ENCODE measurements at regions of chr5 and their contacts with region 1.

Region 1: DNA sequence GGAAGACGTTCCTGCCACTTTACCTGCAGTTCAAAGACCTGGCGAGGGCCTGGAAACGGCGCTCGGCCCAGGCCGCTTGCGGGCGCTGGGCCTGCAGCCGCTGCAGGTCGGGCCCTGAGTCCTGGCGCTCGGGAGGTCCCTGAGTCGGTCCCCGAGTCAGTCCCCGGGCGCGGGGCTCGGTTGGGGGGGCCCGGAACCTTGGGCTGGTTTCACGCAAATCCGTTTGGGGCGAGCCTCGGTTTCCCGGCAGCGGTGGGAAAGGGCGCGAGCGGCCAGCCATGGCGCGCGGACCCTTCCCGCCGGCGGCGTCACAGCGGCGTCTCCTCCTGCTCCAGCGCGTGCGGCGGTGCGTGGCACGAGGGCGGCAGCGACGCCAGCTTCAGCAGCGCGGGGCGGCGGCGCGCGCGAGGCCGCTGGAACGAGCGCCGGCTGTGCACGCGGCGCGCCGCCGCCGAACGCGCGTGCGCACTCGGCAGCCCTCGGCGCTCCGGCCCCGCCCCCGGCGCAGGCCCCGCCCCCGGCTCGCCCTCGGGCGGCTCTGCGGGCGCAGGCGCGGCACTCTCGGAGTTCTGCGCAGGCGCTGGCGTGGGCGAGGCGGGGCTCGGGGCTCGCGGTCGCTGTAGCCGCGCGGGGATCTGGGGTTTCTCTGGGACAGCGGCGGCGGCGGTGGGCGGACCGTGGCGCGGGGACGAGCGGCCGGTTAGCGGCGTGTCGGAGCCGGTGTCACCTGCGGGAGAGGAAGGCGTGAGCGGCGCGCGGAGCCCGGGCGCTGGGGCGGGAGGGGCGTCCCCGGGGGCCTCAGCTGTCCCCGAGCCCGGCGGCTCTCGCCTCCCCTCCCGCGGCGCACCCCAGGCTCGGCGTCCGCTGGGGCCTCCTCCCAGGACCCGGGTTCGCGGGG is 29.9 kb downstream of the EXOC3 start:
- DNase-seq: peak; percentile 76 to 95 (median 86)
- ATAC-seq: peak; percentile 84
- H3K4me3 ChIP-seq: peak overlapping the region; percentile 75
- H3K4me3 Mint-ChIP-seq: peak overlapping the region; percentile 87
- H3K27ac ChIP-seq: peak overlapping the region in 1 of 2 donors; percentile 74
- H3K27ac Mint-ChIP-seq: peak overlapping the region; percentile 87
- H3K4me1 ChIP-seq: peaks cover 42% of the 10 kb centered on the region
- H3K4me1 Mint-ChIP-seq: peaks cover 27% of the 10 kb centered on the region
- H3K27me3 ChIP-seq: peaks cover 14 to 16% of the 10 kb centered on the region in 2 experiments
- H3K27me3 Mint-ChIP-seq: peaks cover 20% of the 10 kb centered on the region
- CTCF ChIP-seq: no peak

Region 2: GRCh38 chr5:217860-218456 is 254.9 kb before region 1 on chr5 and contains the starts of genes CCDC127 and SDHA:
- CTCF ChIA-PET with region 1: no interaction called
- POLR2A ChIA-PET with region 1: no interaction called
- intact Hi-C with region 1: loop called in 1 of 2 experiments (anchors 5 kb)
- DNase-seq: peak; percentile 95 to 100 (median 98)
- ATAC-seq: peak; percentile 81
- H3K4me3 ChIP-seq: peak within 1 kb of the TSS; percentile 93
- H3K4me3 Mint-ChIP-seq: peak within 1 kb of the TSS; percentile 99
- H3K27ac ChIP-seq: peak within 1 kb of the TSS; percentile 57 to 80
- H3K27ac Mint-ChIP-seq: peak within 1 kb of the TSS; percentile 96
- H3K4me1 ChIP-seq: peaks cover 46% of the 10 kb centered on the region
- H3K4me1 Mint-ChIP-seq: peaks cover 68% of the 10 kb centered on the region
- H3K27me3 ChIP-seq: no peaks in the 10 kb centered on the region
- H3K27me3 Mint-ChIP-seq: no peaks in the 10 kb centered on the region
- CTCF ChIP-seq: peak; percentile 30
- total RNA-seq, gene CCDC127: 1.9 to 2.8 TPM
- total RNA-seq, gene SDHA: 244 to 245 TPM

Region 3: DNA sequence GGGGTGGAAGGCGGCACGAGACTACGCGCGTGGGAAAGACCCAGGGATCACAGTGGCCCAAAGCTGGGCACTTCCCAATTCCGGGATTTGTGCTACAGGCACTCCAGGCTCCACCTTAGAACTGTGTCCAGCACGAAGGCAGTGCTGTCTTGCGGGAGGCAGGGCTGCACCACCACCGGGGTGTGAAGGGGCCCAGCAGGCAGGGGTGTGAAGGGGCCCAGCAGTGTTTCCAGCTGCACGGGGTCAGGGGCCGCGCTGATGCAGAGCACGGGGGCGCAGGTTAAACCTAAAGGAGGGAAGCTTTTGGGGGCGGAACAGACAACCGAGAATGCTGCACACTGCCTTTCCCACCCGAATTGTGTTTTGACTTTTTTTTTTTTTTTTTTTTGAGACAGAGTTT is 202.6 kb before region 1 on chr5:
- CTCF ChIA-PET with region 1: no interaction called
- POLR2A ChIA-PET with region 1: no interaction called
- intact Hi-C with region 1: loop called in 1 of 2 experiments (anchors 5 kb)
- DNase-seq: peak in 1 of 14 experiments; percentile 32
- ATAC-seq: no peak
- H3K4me3 ChIP-seq: peak overlapping the region; percentile 78
- H3K4me3 Mint-ChIP-seq: peak overlapping the region; percentile 82
- H3K27ac ChIP-seq: no peak overlapping the region
- H3K27ac Mint-ChIP-seq: peak overlapping the region; percentile 87
- H3K4me1 ChIP-seq: peaks cover 22% of the 10 kb centered on the region
- H3K4me1 Mint-ChIP-seq: peaks cover 37% of the 10 kb centered on the region
- H3K27me3 ChIP-seq: no peaks in the 10 kb centered on the region
- H3K27me3 Mint-ChIP-seq: no peaks in the 10 kb centered on the region
- CTCF ChIP-seq: no peak

Region 4: GRCh38 chr5:565782-566440 is 93.0 kb after region 1 on chr5:
- CTCF ChIA-PET with region 1: no interaction called
- POLR2A ChIA-PET with region 1: no interaction called
- intact Hi-C with region 1: no loop called
- DNase-seq: no peak
- ATAC-seq: no peak
- H3K4me3 ChIP-seq: no peak overlapping the region
- H3K4me3 Mint-ChIP-seq: no peak overlapping the region
- H3K27ac ChIP-seq: no peak overlapping the region
- H3K27ac Mint-ChIP-seq: no peak overlapping the region
- H3K4me1 ChIP-seq: no peaks in the 10 kb centered on the region
- H3K4me1 Mint-ChIP-seq: no peaks in the 10 kb centered on the region
- H3K27me3 ChIP-seq: peaks cover 0 to 11% of the 10 kb centered on the region in 2 experiments
- H3K27me3 Mint-ChIP-seq: peaks cover 23% of the 10 kb centered on the region
- CTCF ChIP-seq: no peak

Region 5: DNA sequence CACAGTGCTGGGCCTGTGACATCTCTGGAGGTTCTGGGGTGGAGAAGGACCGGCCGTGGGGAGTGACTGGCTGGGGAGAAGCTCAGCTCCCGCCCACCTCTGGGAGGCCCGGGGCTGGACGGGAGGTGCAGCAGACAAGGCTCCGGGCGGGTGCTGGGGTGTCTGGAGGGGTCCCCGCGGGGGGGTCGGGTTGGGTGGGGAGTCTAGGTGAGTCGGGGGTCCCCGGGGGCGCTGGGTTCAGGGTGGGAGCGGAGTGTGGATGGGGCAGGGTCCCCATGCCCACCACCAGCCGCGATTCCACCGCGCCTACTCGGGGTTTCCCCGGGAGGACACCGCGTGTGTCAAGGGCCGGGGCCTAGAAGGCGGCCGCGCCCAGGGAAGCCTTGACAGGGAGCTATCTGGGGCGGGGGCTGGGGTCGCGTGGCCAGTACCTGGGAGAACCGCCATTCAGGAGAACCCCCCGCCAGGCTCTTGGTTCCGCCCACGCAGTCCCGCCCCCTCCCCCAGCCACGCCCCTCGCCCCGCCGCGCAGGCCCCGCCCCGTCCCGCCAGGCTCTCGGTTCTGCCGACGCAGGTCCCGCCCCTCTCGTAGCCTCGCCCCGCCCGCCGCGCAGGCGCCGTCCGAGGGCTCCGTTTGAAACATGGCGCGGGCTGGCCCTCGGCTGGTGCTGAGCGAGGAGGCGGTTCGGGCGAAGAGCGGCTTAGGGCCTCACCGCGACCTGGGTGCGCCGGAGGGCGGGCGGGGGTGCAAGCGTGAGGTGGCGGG is 139.0 kb after region 1 on chr5 and contains the start of gene CEP72:
- CTCF ChIA-PET with region 1: no interaction called
- POLR2A ChIA-PET with region 1: interaction called, 5 read pairs
- intact Hi-C with region 1: loop called in 1 of 2 experiments (anchors 2 kb)
- DNase-seq: peak; percentile 89 to 97 (median 93)
- ATAC-seq: peak; percentile 95
- H3K4me3 ChIP-seq: peak within 1 kb of the TSS; percentile 90
- H3K4me3 Mint-ChIP-seq: peak within 1 kb of the TSS; percentile 92
- H3K27ac ChIP-seq: no peak within 1 kb of the TSS
- H3K27ac Mint-ChIP-seq: peak within 1 kb of the TSS; percentile 68
- H3K4me1 ChIP-seq: peaks cover 30% of the 10 kb centered on the region
- H3K4me1 Mint-ChIP-seq: peaks cover 53% of the 10 kb centered on the region
- H3K27me3 ChIP-seq: no peaks in the 10 kb centered on the region
- H3K27me3 Mint-ChIP-seq: peaks cover 11% of the 10 kb centered on the region
- CTCF ChIP-seq: no peak
- total RNA-seq, gene CEP72: 7.6 to 8.0 TPM

Measured in CD4-positive, alpha-beta T cell (primary cell).